GM12878 (cell line): ENCODE measurements at regions of chr11 and their contacts with region 1.

Region 1: DNA sequence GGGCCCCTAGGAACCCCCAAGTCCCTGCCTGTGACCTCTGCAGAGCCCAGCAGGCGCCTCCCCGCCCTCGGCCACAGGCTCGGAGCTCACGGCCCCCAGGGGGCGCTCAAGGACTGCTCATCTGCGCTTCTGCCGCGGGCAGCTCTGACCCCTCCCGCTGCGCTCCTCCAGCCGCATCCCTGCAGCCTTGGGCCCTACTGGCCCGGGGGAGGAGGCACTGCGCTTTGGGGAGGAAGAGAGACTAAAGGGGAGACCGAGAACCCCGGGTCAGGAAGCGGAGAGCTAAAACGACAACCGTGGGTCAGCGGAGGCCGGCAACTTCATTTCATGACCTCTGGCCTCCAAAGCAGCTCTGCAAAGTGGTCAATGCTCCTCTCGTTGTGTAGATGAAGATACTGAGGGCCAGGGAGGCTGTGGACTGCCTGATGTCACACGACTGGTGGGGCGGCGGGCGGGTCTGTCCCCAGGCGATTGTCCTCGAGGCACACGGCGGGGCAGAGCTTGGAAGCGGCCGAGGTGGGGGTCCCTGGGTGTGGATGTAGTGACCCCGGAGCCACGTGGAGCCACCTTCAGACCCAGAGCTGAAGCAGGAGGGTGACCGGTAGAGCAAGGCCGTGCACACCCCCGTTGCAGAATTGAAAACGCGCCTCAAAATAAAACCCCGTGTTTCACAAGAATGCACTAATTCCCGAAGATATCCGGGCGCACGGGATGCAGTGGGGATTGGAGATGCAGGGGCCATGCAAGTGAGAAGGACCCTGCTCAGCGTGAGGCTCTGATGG is 2.7 kb upstream of the KRTAP5-6 start:
- DNase-seq: no peak
- ATAC-seq: peak; percentile 99
- H3K4me3 ChIP-seq: no peak overlapping the region
- H3K27ac ChIP-seq: no peak overlapping the region
- H3K4me1 ChIP-seq: no peaks in the 10 kb centered on the region
- H3K27me3 ChIP-seq: peaks cover 3 to 4% of the 10 kb centered on the region in 2 experiments; a peak in 2 of 4 replicates
- CTCF ChIP-seq: peak; percentile 80 to 94 (median 92); a peak in 5 of 6 replicates
- EP300 ChIP-seq: no peak
- POLR2A ChIP-seq: no peak
- RAD21 ChIP-seq: peak; percentile 89

Region 2: GRCh38 chr11:1050581-1051355 is 643.5 kb before region 1 on chr11:
- CTCF ChIA-PET with region 1: no interaction called
- POLR2A ChIA-PET with region 1: no interaction called
- RAD21 ChIA-PET with region 1: no interaction called
- SMC1A ChIA-PET with region 1: no interaction called
- in situ Hi-C with region 1: no loop called
- intact Hi-C with region 1: no loop called
- DNase-seq: no peak
- ATAC-seq: peak; percentile 100
- H3K4me3 ChIP-seq: no peak overlapping the region
- H3K27ac ChIP-seq: no peak overlapping the region
- H3K4me1 ChIP-seq: no peaks in the 10 kb centered on the region
- H3K27me3 ChIP-seq: no peaks in the 10 kb centered on the region
- CTCF ChIP-seq: peak; percentile 89 to 97 (median 94)
- EP300 ChIP-seq: no peak
- POLR2A ChIP-seq: no peak
- RAD21 ChIP-seq: peak; percentile 89

Region 3: GRCh38 chr11:1564535-1565172 is 129.6 kb before region 1 on chr11:
- CTCF ChIA-PET with region 1: no interaction called
- POLR2A ChIA-PET with region 1: no interaction called
- RAD21 ChIA-PET with region 1: no interaction called
- SMC1A ChIA-PET with region 1: no interaction called
- in situ Hi-C with region 1: no loop called
- intact Hi-C with region 1: no loop called
- DNase-seq: no peak
- ATAC-seq: peak; percentile 39; the same call in 2 of the 3 replicates
- H3K4me3 ChIP-seq: no peak overlapping the region
- H3K27ac ChIP-seq: no peak overlapping the region
- H3K4me1 ChIP-seq: no peaks in the 10 kb centered on the region
- H3K27me3 ChIP-seq: peaks cover 0 to 3% of the 10 kb centered on the region in 2 experiments; a peak in 2 of 4 replicates
- CTCF ChIP-seq: no peak
- EP300 ChIP-seq: no peak
- POLR2A ChIP-seq: no peak
- RAD21 ChIP-seq: no peak

Region 4: GRCh38 chr11:1679881-1680280 is 14.4 kb before region 1 on chr11:
- CTCF ChIA-PET with region 1: interaction called, 19 read pairs
- POLR2A ChIA-PET with region 1: no interaction called
- RAD21 ChIA-PET with region 1: no interaction called
- SMC1A ChIA-PET with region 1: interaction called, 5 read pairs
- in situ Hi-C with region 1: no loop called
- intact Hi-C with region 1: no loop called
- DNase-seq: no peak
- ATAC-seq: no peak
- H3K4me3 ChIP-seq: no peak overlapping the region
- H3K27ac ChIP-seq: no peak overlapping the region
- H3K4me1 ChIP-seq: no peaks in the 10 kb centered on the region
- H3K27me3 ChIP-seq: no peaks in the 10 kb centered on the region; a peak in 2 of 4 replicates
- CTCF ChIP-seq: no peak
- EP300 ChIP-seq: no peak
- POLR2A ChIP-seq: no peak
- RAD21 ChIP-seq: no peak

Region 5: GRCh38 chr11:1820463-1821325 is 126.4 kb after region 1 on chr11:
- CTCF ChIA-PET with region 1: interaction called, 5 read pairs
- POLR2A ChIA-PET with region 1: no interaction called
- RAD21 ChIA-PET with region 1: interaction called, 3 read pairs
- SMC1A ChIA-PET with region 1: interaction called, 4 read pairs
- in situ Hi-C with region 1: loop called (anchors 5 kb)
- intact Hi-C with region 1: no loop called
- DNase-seq: no peak
- ATAC-seq: no peak
- H3K4me3 ChIP-seq: no peak overlapping the region
- H3K27ac ChIP-seq: no peak overlapping the region
- H3K4me1 ChIP-seq: no peaks in the 10 kb centered on the region
- H3K27me3 ChIP-seq: peaks cover 0 to 2% of the 10 kb centered on the region in 2 experiments; a peak in 2 of 4 replicates
- CTCF ChIP-seq: no peak
- EP300 ChIP-seq: no peak
- POLR2A ChIP-seq: no peak
- RAD21 ChIP-seq: no peak

Region 6: DNA sequence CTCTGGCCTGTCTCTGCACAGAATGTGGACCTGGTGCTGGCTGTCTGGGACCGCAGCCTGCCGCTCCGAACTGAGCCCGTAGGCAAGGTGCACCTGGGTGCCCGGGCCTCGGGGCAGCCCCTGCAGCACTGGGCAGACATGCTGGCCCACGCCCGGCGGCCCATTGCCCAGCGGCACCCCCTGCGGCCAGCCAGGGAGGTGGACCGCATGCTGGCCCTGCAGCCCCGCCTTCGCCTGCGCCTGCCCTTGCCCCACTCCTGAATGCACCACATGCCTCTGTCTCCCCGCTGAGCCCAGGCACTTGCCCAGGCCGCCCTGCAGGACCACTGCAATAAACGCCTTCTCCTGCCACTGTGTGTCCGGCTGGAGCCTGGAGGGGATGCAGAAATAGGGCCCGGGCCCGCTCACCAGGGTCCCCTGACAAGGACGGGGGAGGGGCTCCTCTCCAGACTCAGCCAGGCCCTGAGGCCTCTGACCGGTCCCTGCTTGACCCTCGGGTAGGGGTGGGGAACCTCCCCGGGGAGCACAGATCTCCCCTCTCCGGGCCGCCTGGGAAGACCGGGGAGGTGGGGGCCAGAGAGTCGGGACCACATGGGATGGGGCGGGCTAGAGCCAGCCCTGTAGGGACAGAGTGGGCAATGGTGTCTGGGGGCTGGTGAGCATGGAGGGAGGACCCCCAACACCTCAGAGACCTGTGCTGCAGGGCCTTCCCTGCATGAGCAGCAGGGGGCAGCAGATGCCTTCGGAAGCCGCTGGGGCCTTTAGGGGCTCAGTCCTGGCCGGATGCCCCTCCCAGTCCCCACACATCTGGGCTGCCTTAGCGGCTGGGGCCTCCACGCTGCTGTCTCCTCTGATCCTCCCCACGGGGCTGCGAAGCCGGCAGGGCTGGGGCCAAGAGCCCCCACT is 143.2 kb after region 1 on chr11:
- CTCF ChIA-PET with region 1: interaction called, 187 read pairs
- POLR2A ChIA-PET with region 1: no interaction called
- RAD21 ChIA-PET with region 1: interaction called, 107 read pairs
- SMC1A ChIA-PET with region 1: interaction called, 65 read pairs
- in situ Hi-C with region 1: no loop called
- intact Hi-C with region 1: loop called (anchors 1 kb)
- DNase-seq: no peak
- ATAC-seq: peak; percentile 89
- H3K4me3 ChIP-seq: no peak overlapping the region; the same call in 1 of the 2 replicates
- H3K27ac ChIP-seq: no peak overlapping the region
- H3K4me1 ChIP-seq: peaks cover 15% of the 10 kb centered on the region
- H3K27me3 ChIP-seq: no peaks in the 10 kb centered on the region; a peak in 1 of 4 replicates
- CTCF ChIP-seq: peak; percentile 91 to 96 (median 94)
- EP300 ChIP-seq: no peak
- POLR2A ChIP-seq: no peak
- RAD21 ChIP-seq: peak; percentile 96

Region 7: DNA sequence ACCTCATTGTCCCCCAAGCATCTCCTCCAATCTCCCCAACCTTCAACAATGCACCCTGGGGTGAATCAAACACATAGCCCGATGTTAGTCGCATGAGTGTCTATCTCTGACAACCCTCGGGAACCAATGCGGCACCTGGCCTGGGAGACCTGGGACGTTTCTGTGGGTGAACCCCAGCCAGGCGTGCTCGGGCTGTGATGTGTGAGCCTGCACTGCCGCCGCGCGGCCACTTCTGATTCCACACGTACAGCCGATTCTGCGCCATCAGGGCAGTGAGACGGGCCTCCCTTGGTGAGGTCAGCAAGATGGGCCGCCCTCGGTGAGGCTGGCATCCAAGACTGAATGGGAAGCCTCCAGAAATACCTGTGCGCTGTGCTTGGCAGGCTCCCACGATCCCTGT is 308.6 kb after region 1 on chr11:
- CTCF ChIA-PET with region 1: interaction called, 38 read pairs
- POLR2A ChIA-PET with region 1: no interaction called
- RAD21 ChIA-PET with region 1: interaction called, 30 read pairs
- SMC1A ChIA-PET with region 1: interaction called, 10 read pairs
- in situ Hi-C with region 1: no loop called
- intact Hi-C with region 1: no loop called
- DNase-seq: no peak
- ATAC-seq: peak; percentile 79
- H3K4me3 ChIP-seq: no peak overlapping the region
- H3K27ac ChIP-seq: no peak overlapping the region
- H3K4me1 ChIP-seq: no peaks in the 10 kb centered on the region
- H3K27me3 ChIP-seq: no peaks in the 10 kb centered on the region
- CTCF ChIP-seq: no peak
- EP300 ChIP-seq: no peak
- POLR2A ChIP-seq: no peak
- RAD21 ChIP-seq: no peak